Activated CD4-positive, alpha-beta memory T cell treated with anti-CD3 and anti-CD28 coated beads for 36 hours (primary cell): ENCODE measurements at regions of chr20 and their contacts with region 1.

Region 1: DNA sequence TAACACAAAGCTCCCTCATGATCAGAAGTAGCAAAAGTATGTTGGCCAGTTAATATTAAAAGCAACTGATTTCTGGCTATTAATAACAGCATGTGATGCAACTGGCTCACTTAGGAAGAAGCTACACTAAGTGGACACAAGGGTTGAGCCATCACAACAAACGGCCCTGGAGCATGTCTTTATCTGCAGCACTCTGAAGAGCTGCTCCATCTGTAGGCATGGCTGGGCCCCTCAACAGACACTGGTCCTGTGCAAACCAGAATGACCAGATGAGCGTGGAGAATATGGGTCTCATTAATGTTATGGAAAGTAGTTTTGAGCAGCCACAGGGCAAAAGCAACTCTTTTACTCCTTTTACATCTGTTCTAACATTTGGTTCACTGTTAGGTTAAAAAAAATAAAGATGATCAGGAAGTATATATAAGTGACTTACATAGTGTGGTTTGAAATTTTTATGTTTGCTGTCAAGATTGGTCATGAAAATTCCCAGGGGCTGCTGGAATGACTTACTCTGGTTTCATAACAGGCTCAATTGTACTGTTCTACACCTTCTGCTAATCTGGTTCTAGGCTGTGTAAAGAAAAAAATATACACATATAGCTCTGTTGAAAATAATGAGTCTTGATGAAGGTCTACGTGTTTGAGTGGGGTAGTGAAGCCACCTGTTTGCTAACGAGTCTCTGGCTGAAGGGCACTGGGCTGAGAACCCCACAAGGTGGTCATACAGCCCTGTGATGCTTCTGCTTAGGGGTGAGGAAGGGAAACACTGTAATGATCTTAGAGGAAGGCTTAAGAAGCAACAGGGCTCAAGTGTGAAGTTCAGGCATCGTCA is 58.1 kb downstream of the INSM1 start:
- DNase-seq: peak; percentile 32
- H3K4me3 Mint-ChIP-seq: no peak overlapping the region
- H3K27ac Mint-ChIP-seq: peak overlapping the region; percentile 85
- H3K4me1 Mint-ChIP-seq: peaks cover 42% of the 10 kb centered on the region
- H3K27me3 Mint-ChIP-seq: no peaks in the 10 kb centered on the region

Region 2: GRCh38 chr20:20452254-20452676 is 26.2 kb after region 1 on chr20:
- CTCF ChIA-PET with region 1: interaction called, 5 read pairs
- POLR2A ChIA-PET with region 1: interaction called, 4 read pairs
- intact Hi-C with region 1: loop called (anchors 2 kb)
- DNase-seq: peak; percentile 87
- H3K4me3 Mint-ChIP-seq: peak overlapping the region; percentile 72
- H3K27ac Mint-ChIP-seq: peak overlapping the region; percentile 71
- H3K4me1 Mint-ChIP-seq: peaks cover 49% of the 10 kb centered on the region
- H3K27me3 Mint-ChIP-seq: no peaks in the 10 kb centered on the region

Region 3: DNA sequence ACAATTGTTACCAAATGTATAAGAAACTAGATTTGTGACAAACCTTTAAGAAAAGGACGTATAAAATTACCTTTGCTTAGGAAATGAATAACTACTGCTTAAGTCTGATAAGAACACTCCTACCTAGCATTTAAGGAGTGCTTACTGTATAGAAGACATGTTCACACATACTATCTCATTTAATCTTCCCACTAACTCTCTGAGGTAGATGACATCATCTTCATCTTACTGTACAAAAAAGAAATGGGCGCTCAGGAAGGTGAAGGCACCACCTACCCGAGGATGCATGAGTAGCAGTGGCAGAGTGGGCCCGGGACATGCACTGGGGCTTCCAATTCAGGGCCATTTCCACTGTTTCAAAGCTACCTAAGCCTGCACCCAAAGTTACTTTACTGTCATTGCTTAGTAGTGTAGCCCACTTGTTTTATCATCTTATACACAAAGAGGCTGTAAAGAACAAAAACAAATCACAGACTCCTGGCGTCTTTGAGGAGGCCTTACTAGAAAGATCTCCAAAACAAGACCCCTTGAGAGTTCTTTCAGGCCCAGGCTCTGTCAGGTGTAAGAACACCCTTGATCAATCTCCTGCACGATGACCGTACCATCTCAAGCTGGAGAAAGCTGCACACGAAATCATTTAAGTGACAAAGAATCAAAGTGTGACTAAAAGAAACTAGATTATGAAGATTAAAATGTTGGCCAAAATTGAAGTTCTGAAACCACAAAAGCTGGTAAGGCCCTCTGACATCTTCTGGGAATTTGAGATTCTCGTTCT is 69.9 kb after region 1 on chr20:
- CTCF ChIA-PET with region 1: no interaction called
- POLR2A ChIA-PET with region 1: no interaction called
- intact Hi-C with region 1: no loop called
- DNase-seq: peak; percentile 50
- H3K4me3 Mint-ChIP-seq: no peak overlapping the region
- H3K27ac Mint-ChIP-seq: peak overlapping the region; percentile 65
- H3K4me1 Mint-ChIP-seq: peaks cover 70% of the 10 kb centered on the region
- H3K27me3 Mint-ChIP-seq: no peaks in the 10 kb centered on the region